AG04450 (cell line): ENCODE measurements at regions of chr7 and their contacts with region 1.

Region 1: DNA sequence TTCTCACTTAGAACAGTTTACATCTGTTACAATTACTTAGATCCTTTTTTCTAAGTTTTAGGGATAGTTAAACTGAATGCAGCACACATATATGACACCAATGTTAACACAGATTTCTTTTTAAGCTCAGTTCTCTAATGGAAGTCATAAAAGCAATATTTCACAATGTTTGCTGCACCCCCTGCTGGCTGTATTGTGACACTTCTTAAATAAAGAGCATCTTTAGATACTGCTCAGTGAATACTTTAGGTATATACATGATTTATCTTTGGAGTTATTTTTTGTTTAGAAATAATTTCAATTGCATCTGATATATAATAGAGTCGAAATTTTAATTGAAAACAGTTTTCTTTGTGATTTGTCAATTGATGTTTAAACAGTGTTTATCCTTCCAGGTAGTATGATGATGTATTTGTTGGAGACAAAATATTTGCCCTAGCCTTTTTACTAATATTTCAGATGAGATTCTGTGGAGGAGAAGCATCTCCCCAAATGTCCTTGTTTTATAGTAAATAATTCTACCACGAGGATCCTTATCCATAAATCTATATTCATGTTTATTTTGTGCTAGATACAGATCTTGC is 174.4 kb downstream of the ST7 start:
- DNase-seq: peak; percentile 21
- H3K4me3 ChIP-seq: no peak overlapping the region
- H3K27ac ChIP-seq: no peak overlapping the region
- H3K27me3 ChIP-seq: no peaks in the 10 kb centered on the region
- CTCF ChIP-seq: peak; percentile 72

Region 2: DNA sequence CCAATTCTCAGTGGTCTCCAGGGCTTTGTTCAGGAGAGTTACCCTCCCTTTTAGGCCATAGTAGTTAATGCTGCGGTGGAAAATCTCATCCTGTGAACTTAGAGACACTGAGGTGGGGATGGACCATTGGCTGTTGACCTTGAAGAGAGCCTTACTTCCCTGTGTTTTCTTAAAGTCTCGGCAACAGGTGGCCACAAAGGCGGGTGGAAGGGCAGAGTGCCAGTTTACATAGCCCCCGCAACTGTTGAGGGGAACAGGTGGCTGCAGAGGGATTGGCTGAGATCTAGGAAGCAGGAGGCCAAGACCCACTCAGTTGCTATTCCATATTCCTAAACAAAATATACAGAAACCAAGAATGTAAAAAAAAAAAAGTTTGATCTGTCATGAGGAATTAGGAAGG is 13.8 kb before region 1 on chr7:
- CTCF ChIA-PET with region 1: interaction called, 10 read pairs
- POLR2A ChIA-PET with region 1: no interaction called
- DNase-seq: no peak
- H3K4me3 ChIP-seq: no peak overlapping the region
- H3K27ac ChIP-seq: no peak overlapping the region
- H3K27me3 ChIP-seq: no peaks in the 10 kb centered on the region
- CTCF ChIP-seq: no peak

Region 3: DNA sequence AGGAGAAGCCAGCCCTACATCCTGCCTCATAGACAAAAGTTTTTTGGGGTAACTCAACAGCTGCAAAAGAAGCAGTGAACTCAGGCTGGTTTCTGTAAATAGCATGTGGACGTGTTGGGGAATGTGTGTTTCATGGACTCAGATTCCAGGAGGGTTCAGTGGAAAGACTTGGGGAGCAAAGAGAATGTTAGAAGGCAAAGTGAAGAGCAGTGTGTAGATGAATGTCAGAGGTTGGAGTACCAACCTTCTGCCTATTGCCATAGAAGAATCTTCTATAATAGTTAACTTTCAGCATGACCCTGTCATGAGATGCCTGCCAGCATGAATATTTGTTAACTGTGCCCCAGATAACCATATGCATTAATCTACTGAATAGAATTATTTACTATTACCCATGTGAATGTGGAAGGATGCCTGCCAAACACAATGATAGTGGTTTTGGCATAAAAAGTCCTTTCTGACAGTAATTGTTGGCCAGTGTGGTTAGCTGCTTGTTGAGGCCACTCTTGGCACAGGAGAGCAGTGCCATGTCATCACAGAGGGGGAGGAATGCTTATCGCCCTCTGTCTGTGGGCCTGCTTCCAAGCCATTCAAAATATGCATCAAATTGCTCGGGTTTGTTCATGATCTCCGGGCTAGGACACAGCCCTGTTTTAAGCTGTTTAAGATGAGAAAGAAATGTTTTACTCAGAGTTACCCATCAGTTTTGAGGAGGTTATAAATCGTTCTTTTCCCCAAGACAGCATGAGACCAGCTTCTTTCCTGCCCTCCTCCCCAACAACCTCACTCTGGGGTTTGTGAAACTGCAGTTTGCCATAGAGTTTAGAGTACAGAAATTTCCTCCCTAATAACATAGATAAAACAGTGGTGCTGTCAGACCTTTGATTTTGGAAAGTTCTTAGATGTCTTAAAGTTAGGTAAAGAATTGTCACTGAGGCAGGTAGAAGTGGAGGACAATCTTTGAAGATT is 29.8 kb after region 1 on chr7:
- CTCF ChIA-PET with region 1: interaction called, 10 read pairs
- POLR2A ChIA-PET with region 1: no interaction called
- DNase-seq: peak; percentile 59
- H3K4me3 ChIP-seq: no peak overlapping the region
- H3K27ac ChIP-seq: peak overlapping the region; percentile 49
- H3K27me3 ChIP-seq: no peaks in the 10 kb centered on the region
- CTCF ChIP-seq: peak; percentile 48

Region 4: GRCh38 chr7:117385340-117386109 is 257.8 kb after region 1 on chr7:
- CTCF ChIA-PET with region 1: interaction called, 12 read pairs
- POLR2A ChIA-PET with region 1: no interaction called
- DNase-seq: no peak
- H3K4me3 ChIP-seq: no peak overlapping the region
- H3K27ac ChIP-seq: no peak overlapping the region
- H3K27me3 ChIP-seq: no peaks in the 10 kb centered on the region
- CTCF ChIP-seq: peak; percentile 57

Region 5: GRCh38 chr7:117645456-117646181 is 517.9 kb after region 1 on chr7:
- CTCF ChIA-PET with region 1: no interaction called
- POLR2A ChIA-PET with region 1: no interaction called
- DNase-seq: no peak
- H3K4me3 ChIP-seq: no peak overlapping the region
- H3K27ac ChIP-seq: no peak overlapping the region
- H3K27me3 ChIP-seq: no peaks in the 10 kb centered on the region
- CTCF ChIP-seq: no peak